T-cell (primary cell): ENCODE measurements at regions of chr13 and their contacts with region 1.

Region 1: DNA sequence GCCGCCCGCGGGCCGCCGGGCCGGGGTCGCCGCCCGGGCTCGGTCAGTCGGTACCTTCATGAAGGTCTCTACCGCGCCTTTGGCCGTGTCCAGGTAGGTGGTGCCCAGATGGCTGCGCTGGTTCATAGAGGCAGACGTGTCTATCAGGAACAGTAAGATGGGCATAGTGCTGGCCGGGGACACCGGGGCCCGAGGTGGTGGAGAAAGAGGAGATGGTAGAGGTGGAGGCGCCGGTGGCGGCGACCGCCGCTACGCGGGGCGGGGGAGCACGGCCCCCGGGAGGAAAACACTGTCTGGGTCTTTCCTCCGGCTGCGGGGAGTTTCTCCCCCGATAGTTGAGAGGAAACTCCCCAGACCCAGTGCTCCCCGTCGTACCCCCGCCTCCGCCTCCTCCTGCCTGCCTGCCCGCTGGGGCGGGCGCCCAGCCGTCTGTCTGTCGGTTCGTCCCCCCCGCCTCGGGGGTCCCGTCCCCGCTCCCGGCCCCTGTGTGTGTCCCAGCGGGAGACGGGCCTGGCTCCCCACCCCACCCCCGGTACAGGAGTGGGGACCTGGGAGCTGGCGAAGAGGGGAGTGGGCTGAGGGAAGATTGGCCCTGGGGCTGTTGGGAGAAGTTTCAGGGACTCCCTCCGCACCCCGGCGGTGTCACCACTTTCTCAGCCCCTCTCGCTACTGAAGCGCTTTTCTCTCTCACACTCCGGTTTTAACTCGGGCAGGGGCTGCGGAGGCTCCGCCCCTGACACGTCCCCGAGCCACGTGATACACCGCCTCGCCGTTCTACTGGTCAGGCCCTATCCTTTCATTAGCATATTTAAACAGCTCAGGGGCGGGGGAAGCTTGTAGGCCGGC is at the start of gene INTS6:
- DNase-seq: peak; percentile 97 to 99 (median 99)
- ATAC-seq: peak; percentile 82 to 86 (median 82)
- H3K4me3 ChIP-seq: peak within 1 kb of the TSS; percentile 86 to 95
- H3K4me3 Mint-ChIP-seq: peak within 1 kb of the TSS; percentile 84 to 93 (median 91)
- H3K27ac ChIP-seq: peak within 1 kb of the TSS; percentile 94
- H3K27ac Mint-ChIP-seq: peak within 1 kb of the TSS; percentile 98
- H3K4me1 ChIP-seq: peaks cover 12 to 32% of the 10 kb centered on the region in 2 experiments
- H3K4me1 Mint-ChIP-seq: peaks cover 49 to 62% (median 56%) of the 10 kb centered on the region in 3 donors
- H3K27me3 ChIP-seq: no peaks in the 10 kb centered on the region
- H3K27me3 Mint-ChIP-seq: no peaks in the 10 kb centered on the region
- total RNA-seq, gene INTS6: 50.0 to 77.9 (median 58.7) TPM

Region 2: GRCh38 chr13:51297556-51297955 is 155.0 kb before region 1 on chr13:
- CTCF ChIA-PET with region 1: no interaction called
- POLR2A ChIA-PET with region 1: no interaction called
- DNase-seq: no peak
- ATAC-seq: no peak
- H3K4me3 ChIP-seq: no peak overlapping the region
- H3K4me3 Mint-ChIP-seq: no peak overlapping the region
- H3K27ac ChIP-seq: no peak overlapping the region
- H3K27ac Mint-ChIP-seq: no peak overlapping the region
- H3K4me1 ChIP-seq: no peaks in the 10 kb centered on the region
- H3K4me1 Mint-ChIP-seq: no peaks in the 10 kb centered on the region
- H3K27me3 ChIP-seq: peaks cover 0 to 17% of the 10 kb centered on the region in 2 experiments
- H3K27me3 Mint-ChIP-seq: peaks cover 0 to 7% of the 10 kb centered on the region in 2 donors

Region 3: DNA sequence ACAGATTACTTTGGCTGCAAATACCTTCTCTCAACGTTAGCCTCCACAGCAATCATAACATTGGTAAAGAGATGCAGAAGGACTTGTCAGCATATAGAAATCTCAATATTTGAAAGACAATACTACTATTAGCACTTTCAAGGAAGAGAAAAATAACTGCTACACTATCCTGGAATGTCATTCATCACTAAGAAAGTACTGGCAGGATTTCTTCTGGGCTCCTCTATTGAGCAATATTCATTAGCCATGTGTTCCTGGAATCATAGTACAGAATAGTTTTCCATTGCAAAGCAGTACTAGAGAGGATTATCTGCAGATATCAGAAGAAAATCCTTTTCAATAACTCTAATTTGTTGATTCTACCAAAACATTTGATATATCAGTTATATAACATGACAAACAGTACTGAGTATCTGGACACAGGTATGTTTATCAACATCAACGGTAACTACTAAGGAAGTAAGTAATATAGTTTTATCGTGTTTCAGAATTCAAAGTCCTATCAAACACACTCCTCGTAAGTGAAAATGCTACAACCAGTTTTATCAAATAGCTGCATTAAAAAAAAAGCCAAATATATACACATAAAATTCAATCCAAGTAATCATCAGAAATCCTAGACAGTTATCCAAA is 27.1 kb before region 1 on chr13:
- CTCF ChIA-PET with region 1: no interaction called
- POLR2A ChIA-PET with region 1: interaction called in 1 of 2 experiments, 14 read pairs
- DNase-seq: no peak
- ATAC-seq: no peak
- H3K4me3 ChIP-seq: no peak overlapping the region
- H3K4me3 Mint-ChIP-seq: no peak overlapping the region
- H3K27ac ChIP-seq: no peak overlapping the region
- H3K27ac Mint-ChIP-seq: no peak overlapping the region
- H3K4me1 ChIP-seq: peaks cover 9 to 42% of the 10 kb centered on the region in 2 experiments
- H3K4me1 Mint-ChIP-seq: peaks cover 82 to 84% (median 83%) of the 10 kb centered on the region in 3 donors
- H3K27me3 ChIP-seq: no peaks in the 10 kb centered on the region
- H3K27me3 Mint-ChIP-seq: no peaks in the 10 kb centered on the region

Region 4: GRCh38 chr13:51583875-51584730 is 131.5 kb after region 1 on chr13 and contains the start of gene WDFY2:
- CTCF ChIA-PET with region 1: interaction called in 1 of 2 experiments, 10 read pairs
- POLR2A ChIA-PET with region 1: interaction called, 8 to 44 read pairs
- DNase-seq: peak; percentile 97 to 100 (median 98)
- ATAC-seq: peak; percentile 79 to 88 (median 82)
- H3K4me3 ChIP-seq: peak within 1 kb of the TSS; percentile 73 to 91
- H3K4me3 Mint-ChIP-seq: peak within 1 kb of the TSS; percentile 83 to 100 (median 97)
- H3K27ac ChIP-seq: peak within 1 kb of the TSS; percentile 85
- H3K27ac Mint-ChIP-seq: peak within 1 kb of the TSS; percentile 99
- H3K4me1 ChIP-seq: peaks cover 10 to 12% of the 10 kb centered on the region in 2 experiments
- H3K4me1 Mint-ChIP-seq: peaks cover 26 to 44% (median 37%) of the 10 kb centered on the region in 3 donors
- H3K27me3 ChIP-seq: no peaks in the 10 kb centered on the region
- H3K27me3 Mint-ChIP-seq: no peaks in the 10 kb centered on the region
- total RNA-seq, gene WDFY2: 18.2 to 28.3 (median 20.0) TPM

Region 5: GRCh38 chr13:51645154-51645650 is 192.6 kb after region 1 on chr13:
- CTCF ChIA-PET with region 1: interaction called in 1 of 2 experiments, 8 read pairs
- POLR2A ChIA-PET with region 1: interaction called, 6 to 61 read pairs
- DNase-seq: peak in 30 of 35 experiments; percentile 9 to 73 (median 39)
- ATAC-seq: peak; percentile 59 to 93 (median 74)
- H3K4me3 ChIP-seq: no peak overlapping the region
- H3K4me3 Mint-ChIP-seq: peak overlapping the region; percentile 45 to 71 (median 71)
- H3K27ac ChIP-seq: peak overlapping the region; percentile 96
- H3K27ac Mint-ChIP-seq: peak overlapping the region; percentile 93
- H3K4me1 ChIP-seq: peaks cover 30 to 42% of the 10 kb centered on the region in 2 experiments
- H3K4me1 Mint-ChIP-seq: peaks cover 42 to 59% (median 53%) of the 10 kb centered on the region in 3 donors
- H3K27me3 ChIP-seq: no peaks in the 10 kb centered on the region
- H3K27me3 Mint-ChIP-seq: no peaks in the 10 kb centered on the region

Region 6: GRCh38 chr13:51764184-51765141 is 311.9 kb after region 1 on chr13:
- CTCF ChIA-PET with region 1: no interaction called
- POLR2A ChIA-PET with region 1: interaction called in 1 of 2 experiments, 15 read pairs
- DNase-seq: peak in 34 of 35 experiments; percentile 14 to 77 (median 43)
- ATAC-seq: peak; percentile 80 to 92 (median 82)
- H3K4me3 ChIP-seq: peak overlapping the region; percentile 29 to 40
- H3K4me3 Mint-ChIP-seq: peak overlapping the region; percentile 71 to 84 (median 76)
- H3K27ac ChIP-seq: peak overlapping the region; percentile 84
- H3K27ac Mint-ChIP-seq: peak overlapping the region; percentile 97 to 98
- H3K4me1 ChIP-seq: peaks cover 8 to 19% of the 10 kb centered on the region in 2 experiments
- H3K4me1 Mint-ChIP-seq: peaks cover 21 to 28% (median 24%) of the 10 kb centered on the region in 3 donors
- H3K27me3 ChIP-seq: no peaks in the 10 kb centered on the region
- H3K27me3 Mint-ChIP-seq: no peaks in the 10 kb centered on the region

Region 7: GRCh38 chr13:51825165-51825592 is 372.6 kb after region 1 on chr13:
- CTCF ChIA-PET with region 1: no interaction called
- POLR2A ChIA-PET with region 1: interaction called, 3 to 13 read pairs
- DNase-seq: peak in 7 of 35 experiments; percentile 32 to 70 (median 39)
- ATAC-seq: peak; percentile 71 to 73 (median 73)
- H3K4me3 ChIP-seq: peak overlapping the region; percentile 64 to 90
- H3K4me3 Mint-ChIP-seq: peak overlapping the region; percentile 84 to 91 (median 91)
- H3K27ac ChIP-seq: peak overlapping the region; percentile 84
- H3K27ac Mint-ChIP-seq: peak overlapping the region; percentile 94 to 96
- H3K4me1 ChIP-seq: peaks cover 64 to 81% of the 10 kb centered on the region in 2 experiments
- H3K4me1 Mint-ChIP-seq: peaks cover 86 to 97% (median 92%) of the 10 kb centered on the region in 3 donors
- H3K27me3 ChIP-seq: no peaks in the 10 kb centered on the region
- H3K27me3 Mint-ChIP-seq: no peaks in the 10 kb centered on the region

Region 8: DNA sequence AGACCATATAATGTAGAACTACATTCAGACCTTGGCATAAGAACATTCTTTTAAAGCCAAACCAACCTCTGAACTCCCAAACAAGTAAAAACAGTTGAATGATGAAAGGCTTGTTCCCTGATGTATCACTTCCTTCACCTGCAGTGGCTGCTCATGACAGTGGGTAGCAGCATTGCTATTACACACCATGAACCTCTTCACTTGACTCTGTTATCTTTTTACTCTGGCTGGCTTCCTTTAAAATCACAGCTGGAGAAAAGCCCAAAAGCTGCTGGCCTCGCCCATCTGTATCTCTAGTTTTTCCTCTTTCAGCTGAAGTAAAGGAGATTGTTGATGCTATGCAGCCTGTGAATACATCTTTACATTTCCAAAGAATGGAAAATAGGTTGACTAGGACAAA is 930.8 kb after region 1 on chr13:
- CTCF ChIA-PET with region 1: no interaction called
- POLR2A ChIA-PET with region 1: no interaction called
- DNase-seq: no peak
- ATAC-seq: no peak
- H3K4me3 ChIP-seq: no peak overlapping the region
- H3K4me3 Mint-ChIP-seq: no peak overlapping the region
- H3K27ac ChIP-seq: no peak overlapping the region
- H3K27ac Mint-ChIP-seq: no peak overlapping the region
- H3K4me1 ChIP-seq: no peaks in the 10 kb centered on the region
- H3K4me1 Mint-ChIP-seq: no peaks in the 10 kb centered on the region
- H3K27me3 ChIP-seq: no peaks in the 10 kb centered on the region
- H3K27me3 Mint-ChIP-seq: no peaks in the 10 kb centered on the region